Calu3 (cell line): ENCODE measurements at regions of chr7 and their contacts with region 1.

Region 1: GRCh38 chr7:74656837-74657691 is 454 bp upstream of the GTF2I start:
- DNase-seq: peak; percentile 96
- H3K4me3 Mint-ChIP-seq: peak overlapping the region; percentile 65
- H3K27ac Mint-ChIP-seq: peak overlapping the region; percentile 71
- H3K4me1 Mint-ChIP-seq: peaks cover 24% of the 10 kb centered on the region
- H3K27me3 Mint-ChIP-seq: no peaks in the 10 kb centered on the region
- CTCF ChIP-seq: no peak

Region 2: GRCh38 chr7:74633451-74633921 is 23.6 kb before region 1 on chr7:
- CTCF ChIA-PET with region 1: no interaction called
- intact Hi-C with region 1: loop called (anchors 2 kb)
- DNase-seq: peak; percentile 18
- H3K4me3 Mint-ChIP-seq: no peak overlapping the region
- H3K27ac Mint-ChIP-seq: no peak overlapping the region
- H3K4me1 Mint-ChIP-seq: no peaks in the 10 kb centered on the region
- H3K27me3 Mint-ChIP-seq: no peaks in the 10 kb centered on the region
- CTCF ChIP-seq: no peak